Calu3 (cell line): ENCODE measurements at regions of chr3 and their contacts with region 1.

Region 1: DNA sequence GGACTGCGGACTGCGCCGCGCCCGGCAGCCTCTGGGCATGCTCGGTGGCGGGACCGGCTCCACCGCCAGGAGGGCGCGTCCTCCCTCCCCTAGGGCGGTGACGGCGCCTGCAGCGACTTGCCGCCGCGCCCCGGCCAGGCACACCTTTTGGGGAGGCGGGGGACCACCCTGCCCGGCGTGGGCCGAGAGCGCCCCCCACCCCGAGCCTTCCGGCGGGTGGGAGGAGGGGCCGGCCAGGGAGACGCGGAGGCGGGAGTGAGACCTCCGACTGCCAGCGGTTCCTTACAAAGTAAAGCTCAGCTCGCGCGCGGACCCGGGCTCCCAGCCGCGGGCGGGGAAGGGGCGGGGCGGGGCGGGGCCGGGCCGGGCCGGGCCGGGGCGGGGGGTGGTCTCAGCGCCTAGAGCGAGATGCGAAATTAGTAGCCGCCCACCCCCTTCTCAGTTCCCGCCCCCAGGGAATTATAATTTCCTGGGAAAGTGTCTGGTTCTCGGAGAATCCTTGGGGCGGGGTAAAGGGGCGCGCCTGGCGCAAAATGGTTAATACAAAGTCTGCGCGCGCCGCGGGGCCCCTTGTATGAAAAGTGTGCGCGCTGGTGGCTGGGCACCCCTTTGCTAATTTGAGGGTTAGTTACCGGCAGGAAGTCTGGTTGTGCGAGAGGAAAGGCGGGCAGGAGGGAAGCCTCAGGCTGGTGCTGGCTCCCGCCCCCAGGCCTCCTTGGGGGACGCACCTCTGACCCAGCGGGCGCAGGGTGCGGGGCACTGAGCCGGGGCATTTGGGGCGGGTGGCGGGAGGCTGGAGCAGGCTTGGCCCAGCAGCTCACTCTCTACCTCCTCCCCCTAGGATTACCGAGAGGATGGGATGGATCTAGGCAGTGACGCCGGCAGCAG is 224.8 kb upstream of the IL12A start:
- DNase-seq: peak; percentile 95
- H3K4me3 Mint-ChIP-seq: peak overlapping the region; percentile 92
- H3K27ac Mint-ChIP-seq: peak overlapping the region; percentile 85
- H3K4me1 Mint-ChIP-seq: peaks cover 56% of the 10 kb centered on the region
- H3K27me3 Mint-ChIP-seq: no peaks in the 10 kb centered on the region
- CTCF ChIP-seq: peak; percentile 50

Region 2: GRCh38 chr3:159616212-159616825 is 147.5 kb before region 1 on chr3:
- CTCF ChIA-PET with region 1: no interaction called
- intact Hi-C with region 1: loop called (anchors 1 kb)
- DNase-seq: peak; percentile 81
- H3K4me3 Mint-ChIP-seq: no peak overlapping the region
- H3K27ac Mint-ChIP-seq: no peak overlapping the region
- H3K4me1 Mint-ChIP-seq: peaks cover 12% of the 10 kb centered on the region
- H3K27me3 Mint-ChIP-seq: no peaks in the 10 kb centered on the region
- CTCF ChIP-seq: peak; percentile 84

Region 3: GRCh38 chr3:159637883-159638542 is 125.8 kb before region 1 on chr3:
- CTCF ChIA-PET with region 1: interaction called, 3 read pairs
- intact Hi-C with region 1: loop called (anchors 5 kb)
- DNase-seq: peak; percentile 66
- H3K4me3 Mint-ChIP-seq: no peak overlapping the region
- H3K27ac Mint-ChIP-seq: no peak overlapping the region
- H3K4me1 Mint-ChIP-seq: peaks cover 52% of the 10 kb centered on the region
- H3K27me3 Mint-ChIP-seq: no peaks in the 10 kb centered on the region
- CTCF ChIP-seq: no peak

Region 4: GRCh38 chr3:159672728-159673688 is 90.8 kb before region 1 on chr3:
- CTCF ChIA-PET with region 1: no interaction called
- intact Hi-C with region 1: loop called (anchors 5 kb)
- DNase-seq: no peak
- H3K4me3 Mint-ChIP-seq: no peak overlapping the region
- H3K27ac Mint-ChIP-seq: no peak overlapping the region
- H3K4me1 Mint-ChIP-seq: peaks cover 16% of the 10 kb centered on the region
- H3K27me3 Mint-ChIP-seq: no peaks in the 10 kb centered on the region
- CTCF ChIP-seq: peak; percentile 12

Region 5: DNA sequence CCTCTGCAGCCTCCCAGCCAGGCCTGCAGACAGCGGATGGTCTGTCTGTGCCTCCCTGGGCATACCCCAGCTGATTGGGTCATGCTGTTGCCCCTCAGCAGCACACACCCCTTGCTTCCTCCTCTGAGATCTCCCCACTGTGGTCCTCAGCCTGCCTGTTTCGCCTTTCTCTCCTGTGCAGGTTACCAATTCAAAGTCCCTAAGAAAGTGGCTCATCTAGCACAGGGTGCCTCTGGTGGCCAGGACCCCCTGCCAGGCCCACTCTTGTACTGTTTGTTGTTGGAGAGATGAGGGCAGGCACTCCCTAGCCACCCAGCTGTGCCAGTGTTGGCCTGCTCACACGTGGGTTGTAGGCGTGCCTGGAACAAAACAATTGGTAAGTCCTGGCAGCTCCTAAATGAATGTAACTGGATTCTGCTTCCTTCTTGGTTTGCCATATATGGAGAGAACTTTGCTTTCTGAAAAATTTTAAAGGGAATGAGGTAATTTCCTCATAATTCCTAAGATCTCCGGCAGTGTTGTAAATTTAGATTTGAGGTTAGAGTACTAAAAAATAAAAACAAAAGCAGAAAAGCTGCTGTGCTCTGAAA is 11.6 kb after region 1 on chr3:
- CTCF ChIA-PET with region 1: interaction called, 13 read pairs
- intact Hi-C with region 1: no loop called
- DNase-seq: peak; percentile 70
- H3K4me3 Mint-ChIP-seq: no peak overlapping the region
- H3K27ac Mint-ChIP-seq: peak overlapping the region; percentile 6
- H3K4me1 Mint-ChIP-seq: peaks cover 41% of the 10 kb centered on the region
- H3K27me3 Mint-ChIP-seq: no peaks in the 10 kb centered on the region
- CTCF ChIP-seq: no peak

Region 6: DNA sequence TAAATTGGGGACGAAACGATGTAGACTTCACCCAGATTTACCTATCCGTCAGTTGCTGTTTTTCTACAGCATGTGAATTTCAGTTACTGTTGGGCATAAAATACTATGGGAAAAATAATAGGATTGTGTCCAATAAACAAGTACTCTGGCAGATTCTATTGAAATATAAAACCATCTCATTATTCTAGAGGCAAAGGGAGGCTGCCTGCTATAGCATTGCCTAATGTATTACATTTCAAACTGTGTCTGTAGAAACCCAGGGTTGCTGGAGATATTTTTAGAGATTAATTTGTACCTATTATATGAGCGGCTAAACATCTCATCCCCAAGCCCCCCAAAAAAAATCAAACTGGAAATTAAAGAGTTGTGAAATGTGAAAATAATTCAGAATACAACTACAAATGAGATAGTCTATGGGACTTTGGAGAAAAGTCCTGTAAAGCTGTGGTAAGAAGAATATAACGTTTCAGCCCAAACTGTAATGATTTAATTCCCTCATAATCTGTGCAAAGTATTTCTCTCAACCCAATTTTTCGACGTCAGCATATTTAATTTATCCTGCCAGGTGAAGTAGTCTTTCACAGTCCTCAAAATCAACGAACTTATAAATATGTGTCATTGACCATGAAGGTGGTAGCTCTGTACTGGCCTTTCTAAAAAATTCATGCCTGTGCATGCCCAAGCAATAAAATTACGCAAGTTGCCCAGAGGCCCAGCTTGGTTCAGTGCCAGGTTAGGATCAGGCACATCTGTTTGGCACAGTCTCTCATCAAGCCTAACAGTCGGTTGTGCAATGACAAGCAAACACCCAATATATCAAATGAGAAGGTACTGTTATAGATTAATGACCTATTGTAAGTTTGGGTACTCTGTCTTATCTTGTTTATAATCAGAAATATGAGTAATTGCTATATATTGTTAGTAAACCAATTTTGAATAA is 65.5 kb after region 1 on chr3:
- CTCF ChIA-PET with region 1: no interaction called
- intact Hi-C with region 1: no loop called
- DNase-seq: peak; percentile 46
- H3K4me3 Mint-ChIP-seq: no peak overlapping the region
- H3K27ac Mint-ChIP-seq: no peak overlapping the region
- H3K4me1 Mint-ChIP-seq: peaks cover 18% of the 10 kb centered on the region
- H3K27me3 Mint-ChIP-seq: no peaks in the 10 kb centered on the region
- CTCF ChIP-seq: no peak